ENCODE measurements at regions of chr4 and their contacts with region 1.

Region 1: GRCh38 chr4:78293821-78294301 is 236.7 kb downstream of the FRAS1 start:
- DNase-seq: peak; percentile 63 to 67
- H3K4me3 ChIP-seq: no peak overlapping the region
- H3K27ac ChIP-seq: peak overlapping the region; percentile 58
- H3K4me1 ChIP-seq: peaks cover 30% of the 10 kb centered on the region
- H3K27me3 ChIP-seq: no peaks in the 10 kb centered on the region
- CTCF ChIP-seq: no peak

Region 2: GRCh38 chr4:78179123-78179522 is 114.7 kb before region 1 on chr4:
- CTCF ChIA-PET with region 1: no interaction called
- POLR2A ChIA-PET with region 1: no interaction called
- intact Hi-C with region 1: loop called (anchors 1 kb)
- DNase-seq: peak in 1 of 2 experiments; percentile 12
- H3K4me3 ChIP-seq: no peak overlapping the region
- H3K27ac ChIP-seq: no peak overlapping the region
- H3K4me1 ChIP-seq: peaks cover 26% of the 10 kb centered on the region
- H3K27me3 ChIP-seq: no peaks in the 10 kb centered on the region
- CTCF ChIP-seq: no peak

Region 3: DNA sequence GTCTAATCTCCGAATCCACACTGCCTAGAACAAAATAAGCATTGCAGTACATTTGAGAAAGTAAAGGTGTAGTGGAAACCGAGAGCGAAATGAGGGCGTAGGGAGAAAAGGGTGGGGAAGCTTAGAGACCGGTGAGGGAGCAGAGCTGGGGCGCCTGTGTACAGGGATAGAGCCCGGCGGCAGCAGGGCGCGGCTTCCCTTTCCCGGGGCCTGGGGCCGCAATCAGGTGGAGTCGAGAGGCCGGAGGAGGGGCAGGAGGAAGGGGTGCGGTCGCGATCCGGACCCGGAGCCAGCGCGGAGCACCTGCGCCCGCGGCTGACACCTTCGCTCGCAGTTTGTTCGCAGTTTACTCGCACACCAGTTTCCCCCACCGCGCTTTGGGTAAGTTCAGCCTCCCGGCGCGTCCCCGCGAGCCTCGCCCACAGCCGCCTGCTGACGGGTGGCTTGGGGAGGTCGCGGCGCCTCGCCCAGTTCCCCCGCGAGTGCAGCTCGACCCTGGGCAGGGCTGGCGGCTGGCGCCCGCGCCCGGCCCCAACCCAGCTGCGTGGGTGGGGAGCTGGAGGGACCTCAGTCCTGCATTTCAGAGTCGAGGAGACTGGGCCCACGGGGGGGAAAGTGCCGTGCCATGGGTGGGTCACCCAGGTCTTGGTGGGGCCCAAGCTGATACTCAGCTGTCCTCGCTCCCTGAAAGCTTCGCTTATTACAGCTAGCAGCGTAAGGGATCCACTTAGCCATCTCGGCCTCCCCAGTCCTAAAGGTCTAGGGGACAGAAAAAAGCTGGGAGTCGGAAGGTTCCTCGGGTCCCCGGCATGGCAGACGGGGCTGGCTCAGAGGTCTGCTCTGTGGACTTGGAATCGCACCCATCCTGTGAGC is 257.9 kb after region 1 on chr4 and contains the start of gene ANXA3:
- CTCF ChIA-PET with region 1: no interaction called
- POLR2A ChIA-PET with region 1: no interaction called
- intact Hi-C with region 1: loop called (anchors 5 kb)
- DNase-seq: peak; percentile 51 to 72
- H3K4me3 ChIP-seq: peak within 1 kb of the TSS; percentile 88
- H3K27ac ChIP-seq: peak within 1 kb of the TSS; percentile 99
- H3K4me1 ChIP-seq: peaks cover 47% of the 10 kb centered on the region
- H3K27me3 ChIP-seq: no peaks in the 10 kb centered on the region
- CTCF ChIP-seq: no peak
- total RNA-seq, gene ANXA3: 139 and 140 TPM in 2 replicates

Measured in PC-9 (cell line).